Caco-2 (cell line): ENCODE measurements at regions of chr2 and their contacts with region 1.

Region 1: GRCh38 chr2:215619022-215619958 is 183.4 kb upstream of the FN1 start:
- DNase-seq: peak; percentile 89 to 94
- H3K4me3 ChIP-seq: peak overlapping the region; percentile 10; the same call in 1 of the 2 replicates
- H3K4me3 Mint-ChIP-seq: peak overlapping the region; percentile 68
- H3K27ac Mint-ChIP-seq: peak overlapping the region; percentile 95
- H3K4me1 ChIP-seq: peaks cover 58% of the 10 kb centered on the region
- H3K4me1 Mint-ChIP-seq: peaks cover 50% of the 10 kb centered on the region
- H3K27me3 ChIP-seq: no peaks in the 10 kb centered on the region
- H3K27me3 Mint-ChIP-seq: no peaks in the 10 kb centered on the region
- CTCF ChIP-seq: no peak

Region 2: GRCh38 chr2:214679736-214680135 is 939.6 kb before region 1 on chr2:
- CTCF ChIA-PET with region 1: no interaction called
- POLR2A ChIA-PET with region 1: no interaction called
- intact Hi-C with region 1: no loop called
- DNase-seq: no peak
- H3K4me3 ChIP-seq: no peak overlapping the region
- H3K4me3 Mint-ChIP-seq: no peak overlapping the region
- H3K27ac Mint-ChIP-seq: no peak overlapping the region
- H3K4me1 ChIP-seq: no peaks in the 10 kb centered on the region
- H3K4me1 Mint-ChIP-seq: no peaks in the 10 kb centered on the region
- H3K27me3 ChIP-seq: no peaks in the 10 kb centered on the region
- H3K27me3 Mint-ChIP-seq: no peaks in the 10 kb centered on the region
- CTCF ChIP-seq: no peak

Region 3: DNA sequence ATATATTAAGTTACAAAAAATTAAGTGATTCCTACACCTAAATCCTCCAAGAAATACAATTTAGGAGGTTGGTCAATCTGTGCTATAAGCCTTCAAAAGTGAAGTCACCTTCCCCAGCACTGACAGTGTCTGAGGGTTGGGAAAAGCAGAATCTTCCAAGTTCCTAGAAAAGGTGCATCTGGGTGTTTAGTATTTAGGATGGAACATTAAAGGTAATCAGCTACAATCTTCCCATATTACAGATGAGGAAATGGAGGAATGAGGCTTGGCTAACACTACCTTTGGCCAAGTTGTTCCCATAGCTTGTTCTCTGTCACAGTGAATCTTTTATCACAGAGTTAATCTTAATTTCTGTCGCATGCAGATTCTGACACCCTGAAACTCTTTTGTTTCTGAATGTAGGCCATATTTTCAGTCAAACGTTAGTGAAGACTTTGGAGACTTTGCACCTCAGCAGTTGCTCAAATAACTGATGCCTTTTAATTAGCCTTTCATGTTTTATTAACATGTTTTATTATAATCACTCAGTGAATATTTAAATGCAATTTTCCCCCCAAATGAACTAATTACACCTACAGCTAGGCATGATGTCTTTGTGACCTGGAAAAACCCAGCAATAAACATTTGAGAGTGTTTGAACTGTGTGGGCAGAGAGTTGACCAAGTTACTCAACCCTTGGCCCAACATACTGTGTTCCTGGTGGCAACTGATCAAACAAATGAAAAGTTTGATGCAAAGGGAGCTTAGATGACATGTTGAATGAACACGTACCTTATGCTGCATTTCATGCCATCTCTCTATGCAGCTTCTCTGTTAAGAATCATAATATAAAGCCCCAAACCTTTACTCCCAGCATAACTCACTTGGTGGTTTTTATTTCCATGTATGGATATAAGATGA is 201.0 kb before region 1 on chr2:
- CTCF ChIA-PET with region 1: no interaction called
- POLR2A ChIA-PET with region 1: no interaction called
- intact Hi-C with region 1: loop called (anchors 1 kb)
- DNase-seq: no peak
- H3K4me3 ChIP-seq: no peak overlapping the region
- H3K4me3 Mint-ChIP-seq: no peak overlapping the region
- H3K27ac Mint-ChIP-seq: peak overlapping the region; percentile 82
- H3K4me1 ChIP-seq: peaks cover 91% of the 10 kb centered on the region
- H3K4me1 Mint-ChIP-seq: peaks cover 49% of the 10 kb centered on the region
- H3K27me3 ChIP-seq: no peaks in the 10 kb centered on the region
- H3K27me3 Mint-ChIP-seq: no peaks in the 10 kb centered on the region
- CTCF ChIP-seq: no peak

Region 4: GRCh38 chr2:215454519-215455246 is 164.6 kb before region 1 on chr2:
- CTCF ChIA-PET with region 1: no interaction called
- POLR2A ChIA-PET with region 1: no interaction called
- intact Hi-C with region 1: loop called (anchors 1 kb)
- DNase-seq: peak in 1 of 2 experiments; percentile 52
- H3K4me3 ChIP-seq: no peak overlapping the region
- H3K4me3 Mint-ChIP-seq: no peak overlapping the region
- H3K27ac Mint-ChIP-seq: no peak overlapping the region
- H3K4me1 ChIP-seq: peaks cover 9% of the 10 kb centered on the region; the same call in 1 of the 2 replicates
- H3K4me1 Mint-ChIP-seq: peaks cover 7% of the 10 kb centered on the region
- H3K27me3 ChIP-seq: no peaks in the 10 kb centered on the region
- H3K27me3 Mint-ChIP-seq: no peaks in the 10 kb centered on the region
- CTCF ChIP-seq: peak; percentile 65 to 73

Region 5: DNA sequence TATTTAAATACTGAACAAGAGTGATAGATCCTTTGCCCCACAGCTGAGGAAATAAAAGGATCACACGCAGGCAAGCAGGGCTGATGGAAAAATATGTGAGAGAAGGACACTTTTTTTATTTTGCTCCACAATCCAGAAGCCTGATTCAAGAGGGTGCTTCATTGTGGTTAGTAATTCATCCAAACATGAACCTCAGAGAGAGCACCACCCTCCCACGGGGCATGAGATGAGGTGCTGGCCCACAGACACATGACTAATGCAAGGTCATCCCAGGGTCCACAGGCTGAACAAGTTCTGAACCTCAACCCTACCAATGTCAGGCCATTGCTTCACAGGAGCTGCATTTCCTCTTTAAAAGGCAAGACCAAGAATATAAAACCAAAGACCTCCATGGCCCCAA is 154.4 kb after region 1 on chr2:
- CTCF ChIA-PET with region 1: no interaction called
- POLR2A ChIA-PET with region 1: no interaction called
- intact Hi-C with region 1: loop called (anchors 5 kb)
- DNase-seq: no peak
- H3K4me3 ChIP-seq: no peak overlapping the region
- H3K4me3 Mint-ChIP-seq: no peak overlapping the region
- H3K27ac Mint-ChIP-seq: peak overlapping the region; percentile 56
- H3K4me1 ChIP-seq: peaks cover 35% of the 10 kb centered on the region
- H3K4me1 Mint-ChIP-seq: peaks cover 32% of the 10 kb centered on the region
- H3K27me3 ChIP-seq: no peaks in the 10 kb centered on the region
- H3K27me3 Mint-ChIP-seq: no peaks in the 10 kb centered on the region
- CTCF ChIP-seq: no peak

Region 6: DNA sequence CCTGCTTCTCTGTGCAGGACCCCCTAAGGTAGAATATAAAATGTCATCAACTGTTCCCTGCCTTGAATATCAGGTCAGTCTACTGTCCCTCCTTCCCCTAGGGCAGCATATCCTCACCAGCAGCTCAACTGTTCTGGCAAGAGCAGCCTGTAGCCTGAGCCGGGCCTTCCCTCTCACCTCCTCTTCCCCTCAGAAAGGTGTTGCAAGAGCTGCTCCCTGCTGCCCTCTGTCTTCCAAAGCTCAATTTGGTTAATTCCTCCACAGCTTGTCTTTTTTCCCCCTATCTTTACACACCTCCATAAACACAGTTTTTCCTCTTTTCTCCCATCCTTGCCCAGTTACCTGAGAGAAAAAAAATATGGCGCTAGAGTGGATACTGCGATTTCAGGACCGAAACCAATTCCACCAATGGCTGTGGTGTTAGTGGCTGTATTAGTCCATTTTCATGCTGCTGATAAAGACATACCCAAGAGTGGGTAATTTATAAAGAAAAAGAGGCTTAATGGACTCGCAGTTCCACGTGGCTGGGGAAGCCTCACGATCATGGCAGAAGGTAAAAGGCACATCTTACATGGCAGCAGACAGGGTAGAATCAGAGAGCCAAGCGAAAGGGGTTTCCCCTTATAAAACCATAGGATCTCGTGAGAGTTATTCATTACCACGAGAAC is 209.4 kb after region 1 on chr2:
- CTCF ChIA-PET with region 1: interaction called, 4 read pairs
- POLR2A ChIA-PET with region 1: no interaction called
- intact Hi-C with region 1: loop called (anchors 1 kb)
- DNase-seq: peak; percentile 66 to 80
- H3K4me3 ChIP-seq: no peak overlapping the region
- H3K4me3 Mint-ChIP-seq: no peak overlapping the region
- H3K27ac Mint-ChIP-seq: peak overlapping the region; percentile 79
- H3K4me1 ChIP-seq: peaks cover 80% of the 10 kb centered on the region
- H3K4me1 Mint-ChIP-seq: peaks cover 32% of the 10 kb centered on the region
- H3K27me3 ChIP-seq: no peaks in the 10 kb centered on the region
- H3K27me3 Mint-ChIP-seq: no peaks in the 10 kb centered on the region
- CTCF ChIP-seq: peak; percentile 54 to 66

Region 7: GRCh38 chr2:215920244-215921100 is 301.2 kb after region 1 on chr2:
- CTCF ChIA-PET with region 1: no interaction called
- POLR2A ChIA-PET with region 1: no interaction called
- intact Hi-C with region 1: loop called (anchors 1 kb)
- DNase-seq: peak; percentile 71 to 83
- H3K4me3 ChIP-seq: no peak overlapping the region
- H3K4me3 Mint-ChIP-seq: no peak overlapping the region
- H3K27ac Mint-ChIP-seq: peak overlapping the region; percentile 45
- H3K4me1 ChIP-seq: peaks cover 23% of the 10 kb centered on the region
- H3K4me1 Mint-ChIP-seq: peaks cover 34% of the 10 kb centered on the region
- H3K27me3 ChIP-seq: no peaks in the 10 kb centered on the region
- H3K27me3 Mint-ChIP-seq: no peaks in the 10 kb centered on the region
- CTCF ChIP-seq: peak; percentile 88 to 91